Activated CD4-positive, alpha-beta T cell treated with anti-CD3 and anti-CD28 coated beads, Interleukin-2, amount 10 ng/mL, durations not matched to agents 24 days and 14 days (primary cell): ENCODE measurements at regions of chr4 and their contacts with region 1.

Region 1: DNA sequence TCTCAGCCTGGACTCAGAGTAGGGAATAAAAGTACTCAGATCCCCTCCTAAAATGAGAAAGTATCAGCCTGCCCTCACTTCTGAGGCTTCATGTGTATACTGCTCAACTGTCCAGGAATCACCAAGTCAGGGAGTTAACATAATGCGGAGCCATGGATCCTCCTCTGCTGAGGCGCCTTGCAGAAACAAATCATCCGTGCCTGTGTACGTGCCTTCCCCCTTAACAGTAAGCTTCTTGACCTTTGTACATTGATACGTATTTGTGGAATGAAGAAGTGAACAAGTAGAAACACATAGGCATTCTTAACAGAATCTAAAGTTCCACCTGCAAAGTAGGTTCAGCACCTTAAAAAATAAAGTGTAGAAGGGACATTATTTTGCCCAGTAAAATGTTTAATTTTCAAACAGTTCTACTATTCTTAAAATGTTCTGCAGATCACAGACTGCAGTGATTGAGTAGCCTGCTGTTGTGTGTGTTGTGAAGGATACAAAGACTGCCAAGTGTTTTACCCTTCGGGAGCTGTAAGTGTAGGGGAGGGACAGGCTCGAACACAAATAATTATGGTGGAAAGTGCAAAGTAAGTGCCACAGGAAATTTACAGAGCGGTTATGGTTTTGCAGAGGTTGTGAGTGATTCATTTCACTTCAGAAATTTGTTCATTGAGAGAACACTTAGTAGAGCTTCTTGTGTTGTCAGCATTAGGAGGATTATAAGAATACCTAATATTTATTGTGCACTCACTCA is 61.9 kb downstream of the ARHGAP10 start:
- DNase-seq: peak; percentile 72
- H3K4me3 Mint-ChIP-seq: peak overlapping the region; percentile 48
- H3K27ac Mint-ChIP-seq: peak overlapping the region; percentile 74
- H3K4me1 Mint-ChIP-seq: peaks cover 47% of the 10 kb centered on the region
- H3K27me3 Mint-ChIP-seq: no peaks in the 10 kb centered on the region

Region 2: GRCh38 chr4:147617173-147617840 is 176.4 kb before region 1 on chr4 and contains the start of gene TMEM184C:
- intact Hi-C with region 1: loop called (anchors 5 kb)
- DNase-seq: peak; percentile 100
- H3K4me3 Mint-ChIP-seq: peak within 1 kb of the TSS; percentile 99
- H3K27ac Mint-ChIP-seq: peak within 1 kb of the TSS; percentile 94
- H3K4me1 Mint-ChIP-seq: peaks cover 21% of the 10 kb centered on the region
- H3K27me3 Mint-ChIP-seq: peaks cover 17% of the 10 kb centered on the region
- total RNA-seq, gene TMEM184C: 18.3 and 19.7 TPM in 2 replicates

Region 3: GRCh38 chr4:147731580-147732517 is 61.9 kb before region 1 on chr4 and contains the start of gene ARHGAP10:
- intact Hi-C with region 1: loop called (anchors 1 kb)
- DNase-seq: peak; percentile 88
- H3K4me3 Mint-ChIP-seq: peak within 1 kb of the TSS; percentile 94
- H3K27ac Mint-ChIP-seq: peak within 1 kb of the TSS; percentile 90
- H3K4me1 Mint-ChIP-seq: peaks cover 34% of the 10 kb centered on the region
- H3K27me3 Mint-ChIP-seq: peaks cover 36% of the 10 kb centered on the region
- total RNA-seq, gene ARHGAP10: 7.4 and 8.3 TPM in 2 replicates

Region 4: DNA sequence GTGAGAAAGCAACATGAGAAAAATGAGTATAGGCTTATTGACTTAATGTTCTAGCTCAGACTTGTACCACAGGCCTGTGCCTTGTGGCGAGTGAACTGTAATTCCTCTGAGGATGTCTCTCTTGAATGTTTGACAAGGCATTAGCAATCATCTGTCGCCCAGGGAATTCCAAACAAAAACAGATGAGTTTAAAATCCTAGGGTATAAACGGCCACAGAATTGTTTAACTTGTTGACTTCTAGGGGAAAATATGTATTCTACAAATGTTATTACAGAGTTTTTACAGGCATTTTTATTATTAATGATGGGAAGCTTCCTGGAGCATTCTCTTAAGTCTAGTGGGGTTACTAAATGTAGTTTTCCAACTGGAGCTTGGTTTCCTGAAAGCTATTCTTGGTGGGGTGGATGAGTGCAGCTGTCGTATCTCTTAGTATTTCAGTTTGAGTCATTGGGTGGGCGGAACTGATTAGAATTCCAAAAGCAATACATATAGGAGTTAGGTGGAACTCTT is 21.2 kb before region 1 on chr4:
- intact Hi-C with region 1: loop called (anchors 2 kb)
- DNase-seq: no peak
- H3K4me3 Mint-ChIP-seq: no peak overlapping the region
- H3K27ac Mint-ChIP-seq: no peak overlapping the region
- H3K4me1 Mint-ChIP-seq: peaks cover 15% of the 10 kb centered on the region
- H3K27me3 Mint-ChIP-seq: peaks cover 2% of the 10 kb centered on the region

Region 5: DNA sequence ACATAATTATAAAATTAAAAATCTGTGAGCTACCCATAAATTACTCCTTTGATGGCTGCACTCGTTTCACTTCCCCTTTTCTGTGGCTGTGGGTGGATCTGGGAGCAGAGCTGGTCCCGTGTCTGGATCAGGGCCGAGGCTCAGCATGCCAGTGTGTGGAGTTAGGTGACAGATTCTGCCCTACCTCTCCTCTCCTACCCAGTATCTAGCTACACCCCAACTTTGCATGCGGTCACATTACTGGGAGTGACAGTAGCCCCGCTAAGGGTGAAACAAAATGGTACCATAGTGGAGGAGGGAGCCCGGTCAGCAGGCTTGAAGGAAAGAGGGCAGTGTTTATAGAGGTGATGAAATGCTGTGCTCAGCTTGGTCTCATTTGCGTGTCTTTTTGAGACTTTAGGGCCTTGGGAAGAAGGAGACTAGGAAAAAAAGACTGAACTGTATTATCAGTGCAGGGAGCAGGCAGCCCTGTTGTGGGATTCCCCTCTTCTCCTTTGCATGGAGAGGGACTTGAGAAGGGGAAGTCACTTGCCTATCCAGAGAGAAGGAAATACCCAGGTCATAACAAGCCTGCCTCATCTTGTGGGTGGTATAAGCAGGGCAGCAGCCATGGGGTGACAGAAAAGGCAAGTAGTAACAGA is 13.5 kb before region 1 on chr4:
- intact Hi-C with region 1: loop called (anchors 1 kb)
- DNase-seq: no peak
- H3K4me3 Mint-ChIP-seq: no peak overlapping the region
- H3K27ac Mint-ChIP-seq: no peak overlapping the region
- H3K4me1 Mint-ChIP-seq: peaks cover 25% of the 10 kb centered on the region
- H3K27me3 Mint-ChIP-seq: peaks cover 3% of the 10 kb centered on the region

Region 6: GRCh38 chr4:147899512-147899911 is 105.8 kb after region 1 on chr4:
- intact Hi-C with region 1: no loop called
- DNase-seq: no peak
- H3K4me3 Mint-ChIP-seq: no peak overlapping the region
- H3K27ac Mint-ChIP-seq: no peak overlapping the region
- H3K4me1 Mint-ChIP-seq: no peaks in the 10 kb centered on the region
- H3K27me3 Mint-ChIP-seq: no peaks in the 10 kb centered on the region